Posterior cingulate gyrus (tissue), 11 donors: ENCODE measurements at regions of chr12 and their contacts with region 1.

Region 1: DNA sequence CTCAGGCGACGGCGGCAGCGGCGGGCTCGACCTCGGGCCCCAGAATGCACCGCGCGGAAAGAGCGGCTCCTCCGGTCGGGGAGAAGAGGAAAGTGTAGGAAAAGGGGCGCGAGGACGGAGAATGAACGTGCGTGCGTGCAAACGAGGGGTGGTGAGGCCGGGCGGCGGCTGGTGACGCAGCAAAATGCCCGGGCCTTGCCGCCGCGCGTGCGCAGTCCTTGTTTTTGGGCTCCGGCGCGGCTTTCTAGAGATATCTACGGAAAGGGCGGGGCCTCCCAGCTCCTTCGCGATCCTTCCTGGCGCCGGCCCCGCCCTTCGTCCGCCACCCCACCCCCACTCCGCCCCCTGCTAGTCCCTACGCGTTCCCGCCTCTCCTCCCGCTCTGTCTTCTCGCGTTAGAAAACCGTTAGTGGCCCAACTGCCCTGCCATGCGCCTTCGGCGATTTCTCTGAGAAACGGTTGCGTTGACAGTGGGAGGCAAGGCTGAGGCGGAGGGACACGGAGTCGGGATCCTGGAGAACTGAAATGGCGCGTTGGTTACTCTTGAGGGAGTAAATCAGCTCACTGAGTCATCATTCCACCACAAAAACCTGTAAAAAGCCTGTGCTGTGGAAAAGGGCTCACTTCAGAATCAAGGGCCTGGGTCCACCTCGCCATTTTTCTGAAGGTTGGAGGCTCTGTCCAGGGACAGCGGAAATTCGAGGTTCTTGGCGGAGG is at the start of gene PTGES3:
- DNase-seq: peak; percentile 87 to 99 (median 92)

Region 2: GRCh38 chr12:56084958-56085543 is 603.2 kb before region 1 on chr12:
- intact Hi-C with region 1: no loop called
- DNase-seq: peak in 2 of 10 donors; percentile 21 to 79

Region 3: DNA sequence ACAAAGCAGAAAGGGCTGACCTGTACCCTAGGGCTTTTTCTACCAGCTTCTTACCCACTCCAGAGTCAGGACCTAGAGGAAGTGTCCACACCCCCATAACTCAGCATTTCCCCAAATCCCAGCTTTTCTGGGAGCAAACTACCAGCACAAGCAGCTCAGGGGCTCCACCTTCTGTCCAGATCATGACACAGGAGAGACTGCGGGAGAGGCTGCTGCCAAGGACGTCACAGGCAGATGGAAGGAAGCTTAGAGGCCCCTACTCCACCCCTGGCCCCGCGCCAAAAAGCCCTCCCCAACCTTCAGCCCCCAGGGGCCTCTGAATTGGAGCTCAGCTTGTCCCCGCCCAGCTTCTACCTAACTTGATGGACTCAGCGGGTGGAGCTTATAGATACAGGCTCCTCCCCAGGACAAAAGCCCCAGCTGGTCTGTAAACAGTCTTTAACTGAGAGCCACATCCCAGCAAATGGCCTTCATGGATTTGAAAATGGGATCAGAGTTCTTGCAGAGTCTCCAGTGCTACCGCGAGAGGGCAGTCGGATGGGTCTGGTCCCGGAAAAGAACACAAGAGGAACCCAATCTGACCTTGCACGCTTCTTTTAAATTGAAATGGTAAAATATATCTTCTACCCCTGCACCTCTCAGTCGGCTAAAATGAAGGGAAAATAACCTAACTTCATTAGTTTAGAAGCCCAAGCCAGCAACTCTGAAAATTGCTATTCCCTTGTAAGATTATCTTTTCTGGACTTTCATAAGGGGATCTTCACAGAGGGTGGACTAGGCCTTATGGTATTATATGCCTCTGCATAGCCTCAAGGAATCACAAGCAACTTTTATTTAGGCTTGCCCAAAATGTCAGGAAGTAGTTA is 51.4 kb before region 1 on chr12:
- intact Hi-C with region 1: loop called (anchors 2 kb)
- DNase-seq: peak; percentile 87 to 99 (median 95)

Region 4: GRCh38 chr12:56724972-56725722 is 36.9 kb after region 1 on chr12 and contains the start of gene NACA:
- intact Hi-C with region 1: loop called (anchors 1 kb)
- DNase-seq: peak; percentile 98 to 100 (median 100)